Activated naive CD4-positive, alpha-beta T cell treated with anti-CD3 and anti-CD28 coated beads for 36 hours (primary cell): ENCODE measurements at regions of chr2 and their contacts with region 1.

Region 1: GRCh38 chr2:102258386-102259074 is 52.8 kb upstream of the IL1RL1 start:
- DNase-seq: peak; percentile 71
- H3K4me3 Mint-ChIP-seq: no peak overlapping the region
- H3K27ac Mint-ChIP-seq: peak overlapping the region; percentile 95
- H3K4me1 Mint-ChIP-seq: peaks cover 46% of the 10 kb centered on the region
- H3K27me3 Mint-ChIP-seq: no peaks in the 10 kb centered on the region

Region 2: GRCh38 chr2:101717071-101717845 is 541.3 kb before region 1 on chr2:
- CTCF ChIA-PET with region 1: no interaction called
- intact Hi-C with region 1: loop called (anchors 5 kb)
- DNase-seq: peak; percentile 75
- H3K4me3 Mint-ChIP-seq: peak overlapping the region; percentile 38
- H3K27ac Mint-ChIP-seq: peak overlapping the region; percentile 95
- H3K4me1 Mint-ChIP-seq: peaks cover 92% of the 10 kb centered on the region
- H3K27me3 Mint-ChIP-seq: no peaks in the 10 kb centered on the region

Region 3: DNA sequence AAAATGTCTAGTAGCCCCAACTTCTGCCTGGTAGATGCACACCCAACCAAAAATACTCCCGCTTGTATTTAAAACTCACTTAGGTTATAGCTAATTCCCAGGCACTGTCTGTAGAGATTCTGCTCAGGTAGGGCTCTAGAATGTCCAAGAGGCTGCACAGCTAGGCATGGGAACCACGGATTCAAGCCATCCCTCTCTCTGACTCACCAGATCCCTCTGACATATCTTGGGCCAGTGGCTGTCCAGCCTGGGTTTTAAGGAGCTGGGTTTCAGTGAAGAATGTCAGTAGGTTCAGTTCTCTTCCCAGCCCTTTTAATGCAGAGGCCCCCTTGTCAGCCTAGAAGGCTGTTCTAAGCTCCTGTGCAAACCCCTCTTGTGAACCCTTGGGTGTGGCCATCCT is 131.9 kb before region 1 on chr2:
- CTCF ChIA-PET with region 1: no interaction called
- intact Hi-C with region 1: loop called (anchors 1 kb)
- DNase-seq: no peak
- H3K4me3 Mint-ChIP-seq: no peak overlapping the region
- H3K27ac Mint-ChIP-seq: peak overlapping the region; percentile 81
- H3K4me1 Mint-ChIP-seq: peaks cover 31% of the 10 kb centered on the region
- H3K27me3 Mint-ChIP-seq: peaks cover 3% of the 10 kb centered on the region

Region 4: DNA sequence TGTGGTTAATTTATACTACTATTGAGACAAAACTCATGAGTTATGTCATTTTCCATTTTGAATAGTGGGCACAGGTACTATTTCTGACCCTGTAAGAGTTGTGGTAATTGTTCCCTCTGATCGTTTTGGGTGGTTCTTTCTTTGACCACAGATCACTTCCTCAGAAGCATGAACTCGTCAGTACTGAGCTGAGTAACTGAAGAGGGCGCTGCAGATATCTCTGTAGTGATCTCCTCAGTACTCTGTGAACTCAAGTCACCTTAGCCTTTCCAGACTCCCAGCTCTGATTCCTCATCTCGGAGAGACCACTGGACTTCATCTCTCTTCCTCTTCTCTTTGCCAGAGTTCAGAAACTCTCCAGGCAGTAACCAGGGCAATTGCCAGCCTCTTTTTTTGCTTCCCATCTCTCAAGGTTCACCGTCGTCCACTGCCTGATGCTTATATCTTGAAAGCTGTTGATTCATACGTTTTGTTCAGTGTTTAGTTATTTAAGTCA is 43.4 kb after region 1 on chr2:
- CTCF ChIA-PET with region 1: no interaction called
- intact Hi-C with region 1: loop called (anchors 1 kb)
- DNase-seq: peak; percentile 76
- H3K4me3 Mint-ChIP-seq: no peak overlapping the region
- H3K27ac Mint-ChIP-seq: no peak overlapping the region
- H3K4me1 Mint-ChIP-seq: peaks cover 35% of the 10 kb centered on the region
- H3K27me3 Mint-ChIP-seq: no peaks in the 10 kb centered on the region

Region 5: DNA sequence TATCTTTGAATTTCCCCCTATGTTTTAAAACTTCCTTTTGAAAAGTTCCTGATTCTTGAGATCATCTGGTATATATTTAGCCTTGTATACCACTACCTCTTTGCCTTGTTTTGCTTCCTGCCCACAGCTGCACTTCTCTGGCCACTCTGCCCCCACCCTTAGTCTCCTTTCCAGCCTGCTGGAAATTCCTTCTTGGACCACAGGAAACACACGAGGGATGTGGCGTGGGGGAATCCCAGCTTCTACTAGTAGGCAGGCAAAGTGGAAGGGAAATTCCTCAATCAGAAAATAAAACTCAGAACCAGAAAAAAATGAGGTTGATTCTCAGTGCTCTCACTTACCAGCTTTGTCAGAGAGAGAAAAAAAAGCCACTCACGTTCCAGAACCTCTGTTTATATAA is 177.8 kb after region 1 on chr2:
- CTCF ChIA-PET with region 1: no interaction called
- intact Hi-C with region 1: loop called (anchors 1 kb)
- DNase-seq: peak; percentile 56
- H3K4me3 Mint-ChIP-seq: no peak overlapping the region
- H3K27ac Mint-ChIP-seq: peak overlapping the region; percentile 68
- H3K4me1 Mint-ChIP-seq: peaks cover 27% of the 10 kb centered on the region
- H3K27me3 Mint-ChIP-seq: no peaks in the 10 kb centered on the region